ENCODE measurements at regions of chr17 and their contacts with region 1.

Region 1: DNA sequence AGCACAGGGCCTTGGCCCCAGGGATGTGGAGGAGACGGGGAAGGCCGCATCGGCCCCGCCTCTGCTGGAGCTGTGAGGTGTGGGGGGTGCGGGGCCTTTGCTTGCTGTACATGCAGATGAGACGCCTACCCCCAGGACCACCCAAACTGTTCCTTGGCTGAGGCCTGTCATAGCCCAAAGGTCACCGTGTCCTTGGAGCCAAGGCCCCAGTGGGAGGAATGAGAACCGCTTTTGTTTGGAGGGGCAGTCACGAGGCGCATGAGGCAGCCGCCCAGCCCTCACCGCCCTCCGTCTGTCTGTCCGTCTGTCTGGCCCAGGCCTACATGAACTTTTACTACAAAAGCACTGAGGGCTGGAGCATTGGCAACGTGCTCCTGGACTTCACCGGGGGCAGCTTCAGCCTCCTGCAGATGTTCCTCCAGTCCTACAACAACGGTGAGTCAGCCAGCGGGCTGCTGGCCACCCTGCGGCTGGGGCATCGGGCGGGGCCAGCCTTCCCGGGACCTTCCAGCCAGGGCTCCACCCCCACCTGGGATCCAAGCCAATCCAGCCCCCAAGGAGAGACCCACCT is 8.8 kb downstream of the TAX1BP3 start:
- DNase-seq: no peak
- H3K4me3 ChIP-seq: no peak overlapping the region
- H3K27ac ChIP-seq: no peak overlapping the region
- H3K4me1 ChIP-seq: peaks cover 0 to 3% (median 1%) of the 10 kb centered on the region in 4 experiments; a peak in 3 of 7 replicates
- H3K27me3 ChIP-seq: no peaks in the 10 kb centered on the region
- CTCF ChIP-seq: no peak
- EP300 ChIP-seq: no peak
- POLR2A ChIP-seq: peak in 1 of 2 experiments; percentile 40; a peak in 1 of 3 replicates
- RAD21 ChIP-seq: no peak

Region 2: DNA sequence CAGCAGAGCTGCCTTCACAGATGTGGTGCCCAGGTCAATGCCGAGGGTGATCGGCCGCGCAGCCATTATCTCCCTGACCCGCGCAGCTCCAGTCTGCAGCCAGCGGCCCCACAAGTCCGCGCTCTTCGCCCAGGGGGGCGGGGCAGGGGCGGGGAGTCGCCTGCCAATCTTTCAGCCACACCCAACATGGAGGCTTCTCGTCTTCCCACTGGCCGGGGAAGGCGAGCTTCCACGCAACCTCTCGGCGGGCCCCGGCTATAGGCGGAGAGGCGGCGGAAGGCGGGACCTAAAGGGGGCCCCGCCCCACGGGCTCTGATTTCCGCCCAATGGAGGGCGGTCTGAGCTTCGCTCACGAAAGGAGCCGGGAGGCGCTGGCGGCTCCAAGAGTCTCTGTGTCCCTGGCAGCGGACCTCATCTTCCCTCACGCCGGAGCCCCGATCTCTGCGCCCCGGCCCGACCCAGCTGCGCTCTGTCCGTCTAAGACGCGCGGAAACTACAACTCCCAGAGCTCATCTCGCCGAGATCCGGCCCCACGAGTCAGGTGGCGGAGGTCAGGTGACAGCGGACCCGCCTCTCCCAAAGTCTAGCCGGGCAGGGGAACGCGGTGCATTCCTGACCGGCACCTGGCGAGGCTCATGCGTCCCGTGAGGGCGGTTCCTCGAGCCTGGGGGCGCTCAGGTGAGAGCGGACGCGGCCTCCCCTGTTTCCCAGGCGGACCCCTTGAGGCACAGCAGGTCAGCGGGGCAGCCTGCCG is 23.3 kb before region 1 on chr17 and contains the starts of genes CTNS and SHPK:
- CTCF ChIA-PET with region 1: no interaction called
- POLR2A ChIA-PET with region 1: interaction called, 10 read pairs
- DNase-seq: peak; percentile 82 to 95
- H3K4me3 ChIP-seq: peak within 1 kb of the TSS; percentile 87 to 95 (median 88)
- H3K27ac ChIP-seq: peak within 1 kb of the TSS; percentile 96
- H3K4me1 ChIP-seq: peaks cover 0 to 8% (median 5%) of the 10 kb centered on the region in 4 experiments; a peak in 3 of 7 replicates
- H3K27me3 ChIP-seq: no peaks in the 10 kb centered on the region
- CTCF ChIP-seq: no peak
- EP300 ChIP-seq: no peak
- POLR2A ChIP-seq: peak; percentile 55 to 66
- RAD21 ChIP-seq: no peak; a peak in 1 of 4 replicates
- total RNA-seq, gene CTNS: 12.9 and 16.4 TPM in 2 replicates
- total RNA-seq, gene SHPK: 36.7 and 37.3 TPM in 2 replicates

Region 3: DNA sequence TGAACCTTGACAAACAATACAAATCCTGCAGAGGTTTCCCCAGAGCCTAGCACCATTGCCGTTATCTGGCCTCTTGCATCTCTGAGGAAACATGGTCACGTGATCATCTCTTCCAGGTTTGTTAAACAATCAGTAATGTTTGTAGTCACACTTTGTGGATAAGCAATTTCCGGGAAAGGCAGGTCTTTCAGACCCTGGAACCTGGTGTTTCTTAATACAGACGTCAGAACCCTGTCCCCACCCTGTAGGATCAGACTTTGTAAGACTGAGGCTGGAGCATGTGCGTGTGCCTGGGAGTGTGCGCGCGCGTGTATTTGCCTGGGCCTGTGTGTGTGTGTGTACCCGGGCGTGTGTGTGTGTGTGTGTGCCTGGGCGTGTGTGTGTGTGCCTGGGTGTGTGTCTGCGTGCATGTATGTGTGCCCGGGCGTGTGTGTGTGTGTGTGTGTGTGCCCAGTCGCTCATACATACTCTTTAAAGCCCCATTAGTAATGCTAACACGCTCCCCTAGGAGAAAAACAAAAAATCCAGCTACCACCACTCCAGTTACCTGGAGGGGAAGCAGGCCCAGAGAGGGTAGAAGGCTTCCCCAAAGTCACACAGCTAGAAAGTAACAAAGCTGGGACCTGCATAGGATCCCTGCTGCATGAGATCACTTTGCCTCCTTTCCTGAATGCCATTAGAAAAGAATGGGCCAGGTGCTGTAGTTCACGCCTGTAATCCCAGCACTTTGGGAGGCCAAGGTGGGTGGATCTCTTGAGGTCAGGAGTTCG is 17.7 kb before region 1 on chr17:
- CTCF ChIA-PET with region 1: interaction called, 20 read pairs
- POLR2A ChIA-PET with region 1: interaction called, 194 read pairs
- DNase-seq: no peak
- H3K4me3 ChIP-seq: no peak overlapping the region
- H3K27ac ChIP-seq: no peak overlapping the region
- H3K4me1 ChIP-seq: peaks cover 0 to 8% (median 4%) of the 10 kb centered on the region in 4 experiments; a peak in 3 of 7 replicates
- H3K27me3 ChIP-seq: no peaks in the 10 kb centered on the region
- CTCF ChIP-seq: no peak
- EP300 ChIP-seq: no peak
- POLR2A ChIP-seq: no peak
- RAD21 ChIP-seq: no peak

Region 4: GRCh38 chr17:3715296-3715695 is 55.7 kb after region 1 on chr17:
- CTCF ChIA-PET with region 1: no interaction called
- POLR2A ChIA-PET with region 1: no interaction called
- DNase-seq: no peak
- H3K4me3 ChIP-seq: no peak overlapping the region
- H3K27ac ChIP-seq: no peak overlapping the region
- H3K4me1 ChIP-seq: no peaks in the 10 kb centered on the region
- H3K27me3 ChIP-seq: no peaks in the 10 kb centered on the region
- CTCF ChIP-seq: no peak
- EP300 ChIP-seq: no peak
- POLR2A ChIP-seq: no peak
- RAD21 ChIP-seq: no peak